ENCODE measurements at regions of chr12 and their contacts with region 1.

Region 1: GRCh38 chr12:84874825-84875139 is 37.8 kb downstream of the SLC6A15 start:
- DNase-seq: no peak
- ATAC-seq: no peak
- H3K4me3 ChIP-seq: no peak overlapping the region
- H3K27ac ChIP-seq: no peak overlapping the region
- H3K4me1 ChIP-seq: no peaks in the 10 kb centered on the region
- H3K27me3 ChIP-seq: no peaks in the 10 kb centered on the region

Region 2: GRCh38 chr12:84924981-84925380 is 50.2 kb after region 1 on chr12:
- intact Hi-C with region 1: no loop called
- DNase-seq: no peak
- ATAC-seq: no peak
- H3K4me3 ChIP-seq: no peak overlapping the region
- H3K27ac ChIP-seq: no peak overlapping the region
- H3K4me1 ChIP-seq: no peaks in the 10 kb centered on the region
- H3K27me3 ChIP-seq: no peaks in the 10 kb centered on the region

Region 3: GRCh38 chr12:85029456-85029855 is 154.7 kb after region 1 on chr12:
- intact Hi-C with region 1: loop called (anchors 2 to 5 kb)
- DNase-seq: no peak
- ATAC-seq: no peak
- H3K4me3 ChIP-seq: no peak overlapping the region
- H3K27ac ChIP-seq: no peak overlapping the region
- H3K4me1 ChIP-seq: no peaks in the 10 kb centered on the region
- H3K27me3 ChIP-seq: no peaks in the 10 kb centered on the region

Measured in aorta (tissue), 5 donors.